ENCODE measurements at regions of chr3 and their contacts with region 1.

Region 1: DNA sequence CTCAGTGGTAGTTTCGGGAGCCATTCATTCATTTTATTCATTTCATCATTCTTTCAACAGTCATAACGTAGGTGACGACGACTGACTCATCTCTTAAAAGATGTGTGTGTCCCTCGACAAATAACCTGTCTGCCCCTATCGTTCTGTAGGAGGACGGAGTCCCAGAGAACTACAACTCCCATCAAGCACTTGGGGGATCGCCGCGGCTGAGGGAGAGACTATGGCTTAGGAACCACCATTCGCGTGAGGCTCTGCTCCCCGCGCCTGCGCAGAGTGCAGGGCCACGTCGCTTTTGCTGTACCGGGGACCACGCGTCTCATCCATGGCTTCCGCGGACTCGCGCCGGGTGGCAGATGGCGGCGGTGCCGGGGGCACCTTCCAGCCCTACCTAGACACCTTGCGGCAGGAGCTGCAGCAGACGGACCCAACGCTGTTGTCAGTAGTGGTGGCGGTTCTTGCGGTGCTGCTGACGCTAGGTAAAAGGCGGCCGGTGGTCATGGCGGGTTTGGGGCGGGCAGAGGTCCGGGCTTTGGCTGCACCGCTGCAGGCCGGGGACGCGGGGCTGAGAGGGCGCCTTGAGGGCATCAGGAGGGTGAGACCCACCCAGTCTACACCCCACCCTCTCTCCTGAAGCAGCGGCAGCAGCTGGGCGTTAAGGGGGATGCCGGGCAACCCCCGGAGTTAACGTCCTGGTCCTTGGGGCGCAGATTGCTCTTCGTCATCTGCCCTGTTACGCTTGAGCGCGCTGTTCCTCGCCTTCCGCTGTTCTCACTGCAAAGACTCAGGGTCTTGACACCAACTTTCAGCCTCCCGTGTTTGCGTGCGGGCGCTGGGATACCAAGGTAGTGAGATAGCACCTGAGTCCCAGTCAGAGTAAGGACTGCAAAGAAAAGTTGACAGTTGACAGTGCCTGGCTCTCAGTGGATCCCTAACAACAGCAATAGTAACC is at the start of gene SRPRB:
- DNase-seq: peak; percentile 99
- H3K4me3 ChIP-seq: peak within 1 kb of the TSS; percentile 81 to 99 (median 94)
- H3K27ac ChIP-seq: peak within 1 kb of the TSS; percentile 23 to 87 (median 84)
- H3K4me1 ChIP-seq: peaks cover 9 to 37% (median 16%) of the 10 kb centered on the region in 6 donors
- H3K27me3 ChIP-seq: no peaks in the 10 kb centered on the region
- CTCF ChIP-seq: peak in 1 of 11 experiments; percentile 24
- POLR2A ChIP-seq: peak in 1 of 3 donors; percentile 27
- total RNA-seq, gene SRPRB: 22.3 to 38.5 (median 28.1) TPM

Region 2: GRCh38 chr3:133246119-133246518 is 559.7 kb before region 1 on chr3:
- intact Hi-C with region 1: no loop called
- DNase-seq: no peak
- H3K4me3 ChIP-seq: no peak overlapping the region
- H3K27ac ChIP-seq: no peak overlapping the region
- H3K4me1 ChIP-seq: no peaks in the 10 kb centered on the region
- H3K27me3 ChIP-seq: no peaks in the 10 kb centered on the region
- CTCF ChIP-seq: no peak
- POLR2A ChIP-seq: no peak

Region 3: DNA sequence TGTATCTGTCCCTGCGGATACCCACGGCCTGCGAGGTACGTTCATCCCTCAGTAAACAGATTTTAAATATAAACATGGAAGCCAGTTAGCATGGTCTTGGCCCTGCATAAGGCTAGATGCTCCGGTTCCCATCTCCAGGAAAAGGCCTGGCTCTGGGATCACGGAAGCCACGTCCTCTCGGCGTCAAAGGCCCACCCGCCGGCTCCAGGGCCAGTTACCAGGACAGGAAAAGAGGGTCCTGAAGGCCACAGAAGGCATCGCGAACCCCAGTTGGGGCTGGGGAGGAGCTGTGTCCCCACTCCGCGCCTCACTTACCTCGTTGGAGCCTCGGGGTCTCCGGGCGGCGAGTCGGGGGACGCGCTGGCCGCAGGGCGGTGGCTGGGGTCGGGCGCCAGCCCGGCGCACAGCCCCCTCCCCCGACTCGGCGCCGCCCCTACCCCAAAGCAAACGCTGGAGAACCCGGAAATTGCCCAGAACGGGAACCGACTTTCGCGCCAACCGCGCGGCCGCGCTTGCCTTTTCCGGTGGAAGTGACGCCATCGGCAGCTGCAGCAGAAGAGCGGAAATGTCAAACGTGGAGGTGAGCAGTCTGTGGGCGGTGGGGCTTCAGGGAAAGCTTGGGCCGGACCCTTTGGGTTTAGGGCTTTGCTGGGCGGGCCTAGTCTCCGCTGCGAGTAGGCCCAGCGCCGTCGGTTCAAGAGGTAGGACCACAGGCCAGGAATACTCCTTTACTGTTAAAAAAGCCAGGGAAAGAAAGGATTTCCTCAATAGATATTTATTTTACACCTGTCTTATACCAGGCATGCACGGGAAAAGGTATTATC is 144.1 kb before region 1 on chr3 and contains the start of gene TOPBP1:
- intact Hi-C with region 1: loop called (anchors 10 kb)
- DNase-seq: peak; percentile 97
- H3K4me3 ChIP-seq: peak within 1 kb of the TSS; percentile 53 to 94 (median 92)
- H3K27ac ChIP-seq: peak within 1 kb of the TSS; percentile 63 to 93 (median 86)
- H3K4me1 ChIP-seq: peaks cover 19 to 55% (median 36%) of the 10 kb centered on the region in 6 donors
- H3K27me3 ChIP-seq: no peaks in the 10 kb centered on the region
- CTCF ChIP-seq: no peak
- POLR2A ChIP-seq: no peak
- total RNA-seq, gene TOPBP1: 28.1 to 61.9 (median 37.6) TPM

Region 4: GRCh38 chr3:133742351-133743091 is 63.3 kb before region 1 on chr3:
- intact Hi-C with region 1: no loop called
- DNase-seq: no peak
- H3K4me3 ChIP-seq: no peak overlapping the region
- H3K27ac ChIP-seq: no peak overlapping the region
- H3K4me1 ChIP-seq: peaks cover 0 to 9% (median 0%) of the 10 kb centered on the region in 6 donors
- H3K27me3 ChIP-seq: peaks cover 0 to 43% (median 15%) of the 10 kb centered on the region in 7 donors
- CTCF ChIP-seq: no peak
- POLR2A ChIP-seq: no peak

Region 5: DNA sequence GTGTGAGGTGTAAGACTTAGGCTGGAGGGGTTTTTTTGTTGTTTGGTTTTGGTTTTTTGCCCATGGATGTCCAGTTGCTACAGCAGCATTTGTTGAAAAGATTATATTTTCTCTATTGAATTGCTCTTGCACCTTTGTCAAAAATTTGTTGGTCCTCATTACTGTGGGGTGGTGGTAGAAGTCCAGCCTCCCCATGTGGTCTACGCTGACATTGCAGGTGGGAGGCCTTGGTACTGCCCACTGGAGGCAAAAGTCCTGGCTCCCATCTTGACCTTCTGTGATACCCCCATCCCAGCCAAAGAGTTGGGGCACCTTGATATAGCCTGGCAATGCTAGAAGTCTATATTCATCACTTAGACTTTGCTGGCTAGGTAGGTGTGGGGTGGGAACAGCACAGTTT is 95.3 kb after region 1 on chr3:
- intact Hi-C with region 1: no loop called
- DNase-seq: no peak
- H3K4me3 ChIP-seq: no peak overlapping the region
- H3K27ac ChIP-seq: no peak overlapping the region
- H3K4me1 ChIP-seq: peaks cover 0 to 6% (median 3%) of the 10 kb centered on the region in 6 donors
- H3K27me3 ChIP-seq: peaks cover 0 to 27% (median 8%) of the 10 kb centered on the region in 7 donors
- CTCF ChIP-seq: peak in 1 of 11 experiments; percentile 20
- POLR2A ChIP-seq: no peak

Measured in spleen (tissue), 13 donors.